ENCODE measurements at regions of chr12 and their contacts with region 1.

Region 1: GRCh38 chr12:122054842-122055520 is 23.6 kb upstream of the MLXIP start:
- DNase-seq: no peak
- ATAC-seq: peak in 1 of 4 donors; percentile 7
- H3K4me3 ChIP-seq: no peak overlapping the region
- H3K27ac ChIP-seq: peak overlapping the region in 1 of 3 donors; percentile 7
- H3K4me1 ChIP-seq: peaks cover 0 to 29% (median 11%) of the 10 kb centered on the region in 4 donors
- H3K27me3 ChIP-seq: no peaks in the 10 kb centered on the region
- CTCF ChIP-seq: no peak
- POLR2A ChIP-seq: no peak

Region 2: GRCh38 chr12:121925358-121925695 is 129.7 kb before region 1 on chr12:
- intact Hi-C with region 1: no loop called
- DNase-seq: no peak
- ATAC-seq: peak in 2 of 4 donors; percentile 41 to 62
- H3K4me3 ChIP-seq: no peak overlapping the region
- H3K27ac ChIP-seq: peak overlapping the region; percentile 52 to 59 (median 52)
- H3K4me1 ChIP-seq: no peaks in the 10 kb centered on the region
- H3K27me3 ChIP-seq: no peaks in the 10 kb centered on the region
- CTCF ChIP-seq: no peak
- POLR2A ChIP-seq: no peak

Region 3: DNA sequence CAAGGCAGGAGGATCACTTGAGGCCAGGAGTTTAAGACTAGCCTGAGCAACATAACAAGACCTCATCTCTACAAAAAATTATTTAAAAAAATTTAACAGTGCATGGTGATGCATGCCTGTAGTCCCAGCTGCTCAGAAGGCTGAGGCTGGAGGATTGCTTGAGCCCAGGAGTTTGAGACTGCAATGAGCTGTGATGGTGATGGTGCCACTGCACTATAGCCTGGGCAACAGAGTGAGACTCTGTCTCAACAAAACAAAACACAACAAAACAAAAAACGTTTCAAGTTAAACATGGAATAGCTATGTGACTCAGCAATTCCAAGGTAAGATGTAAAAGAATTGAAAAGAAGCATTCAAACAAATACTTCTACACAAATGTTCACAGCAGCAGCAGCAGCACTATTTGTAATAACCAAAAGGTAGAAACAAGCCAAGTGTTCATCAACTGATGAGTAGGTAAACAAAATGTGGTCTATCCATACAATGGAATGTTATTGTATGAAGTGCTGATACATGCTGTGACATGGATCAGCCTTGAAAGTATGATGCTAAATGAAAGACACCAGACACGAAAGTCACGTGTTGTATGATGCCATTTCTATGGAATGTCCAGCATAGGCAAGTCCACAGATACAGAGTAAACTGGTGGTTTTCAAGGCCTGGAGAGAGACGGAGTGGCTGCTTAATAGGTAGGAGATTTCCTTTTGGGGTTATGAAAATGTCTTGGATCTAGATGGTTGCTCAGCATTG is 105.2 kb before region 1 on chr12:
- intact Hi-C with region 1: no loop called
- DNase-seq: no peak
- ATAC-seq: no peak
- H3K4me3 ChIP-seq: no peak overlapping the region
- H3K27ac ChIP-seq: no peak overlapping the region
- H3K4me1 ChIP-seq: no peaks in the 10 kb centered on the region
- H3K27me3 ChIP-seq: no peaks in the 10 kb centered on the region
- CTCF ChIP-seq: no peak
- POLR2A ChIP-seq: no peak

Region 4: GRCh38 chr12:122123051-122123760 is 68.2 kb after region 1 on chr12:
- intact Hi-C with region 1: loop called (anchors 5 kb)
- DNase-seq: peak in 2 of 3 donors; percentile 62 to 77
- ATAC-seq: peak; percentile 24 to 42 (median 29)
- H3K4me3 ChIP-seq: peak overlapping the region in 1 of 3 donors; percentile 27
- H3K27ac ChIP-seq: peak overlapping the region; percentile 69 to 91 (median 75)
- H3K4me1 ChIP-seq: peaks cover 3 to 49% (median 22%) of the 10 kb centered on the region in 4 donors
- H3K27me3 ChIP-seq: no peaks in the 10 kb centered on the region
- CTCF ChIP-seq: peak; percentile 71 to 84 (median 76)
- POLR2A ChIP-seq: no peak

Region 5: DNA sequence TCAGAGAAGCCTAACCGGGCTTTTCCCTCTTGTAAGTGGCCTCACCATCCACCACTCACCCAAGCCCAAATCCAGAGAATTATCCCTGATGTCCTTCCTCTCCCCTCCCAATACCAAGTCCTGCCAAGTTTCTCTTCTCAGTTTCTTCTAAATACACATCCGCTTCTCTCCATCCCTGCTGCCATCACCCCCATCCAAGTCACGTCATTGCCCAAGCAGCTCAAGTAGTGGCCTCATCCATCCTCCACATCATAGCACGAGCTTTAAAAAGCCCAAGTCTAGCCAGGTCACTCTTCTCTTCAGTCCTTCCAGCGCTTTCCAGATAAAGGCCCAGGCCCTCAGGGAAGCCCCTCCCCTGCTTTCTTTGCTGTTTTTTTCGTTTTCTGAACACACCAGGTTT is 93.7 kb after region 1 on chr12:
- intact Hi-C with region 1: no loop called
- DNase-seq: no peak
- ATAC-seq: peak in 3 of 4 donors; percentile 9 to 23 (median 16)
- H3K4me3 ChIP-seq: no peak overlapping the region
- H3K27ac ChIP-seq: no peak overlapping the region
- H3K4me1 ChIP-seq: no peaks in the 10 kb centered on the region
- H3K27me3 ChIP-seq: no peaks in the 10 kb centered on the region
- CTCF ChIP-seq: no peak
- POLR2A ChIP-seq: no peak

Region 6: DNA sequence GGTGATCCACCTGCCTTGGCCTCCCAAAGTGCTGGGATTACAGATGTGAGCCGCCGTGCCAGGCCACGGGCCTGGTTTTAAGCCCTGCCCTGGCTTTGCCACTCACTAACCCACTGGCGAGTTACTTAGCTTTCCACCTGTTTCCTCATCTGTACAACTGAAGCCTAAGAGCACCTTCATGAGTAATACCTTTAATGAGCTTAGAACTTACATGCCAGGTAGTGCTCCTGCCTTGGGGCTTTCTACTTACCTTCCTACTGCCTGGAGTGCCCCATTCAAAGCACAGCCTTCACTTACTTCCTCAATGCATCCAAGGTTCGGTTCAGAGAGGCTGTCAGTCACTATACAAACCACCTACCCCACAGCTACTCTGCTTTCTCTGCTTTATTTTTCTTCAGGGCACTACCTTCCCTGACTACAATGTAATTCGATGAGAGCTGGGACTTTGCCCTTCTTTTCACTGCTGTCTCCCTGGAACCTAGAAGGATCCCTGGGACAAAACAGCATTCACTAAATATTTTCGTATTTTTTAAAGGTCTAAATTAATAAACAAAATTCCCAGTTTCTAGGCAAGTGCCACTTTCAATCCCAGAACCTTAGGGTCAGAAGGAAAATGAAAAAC is 431.9 kb after region 1 on chr12:
- intact Hi-C with region 1: no loop called
- DNase-seq: no peak
- ATAC-seq: peak; percentile 16 to 64 (median 42)
- H3K4me3 ChIP-seq: no peak overlapping the region
- H3K27ac ChIP-seq: peak overlapping the region in 2 of 3 donors; percentile 3 to 67
- H3K4me1 ChIP-seq: peaks cover 0 to 45% (median 18%) of the 10 kb centered on the region in 4 donors
- H3K27me3 ChIP-seq: no peaks in the 10 kb centered on the region
- CTCF ChIP-seq: no peak
- POLR2A ChIP-seq: no peak